Naive thymus-derived CD4-positive, alpha-beta T cell (primary cell): ENCODE measurements at regions of chr14 and their contacts with region 1.

Region 1: GRCh38 chr14:91060351-91061055 is at the start of gene RPS6KA5:
- DNase-seq: peak; percentile 93 to 100 (median 100)
- ATAC-seq: peak; percentile 89
- H3K4me3 ChIP-seq: peak within 1 kb of the TSS; percentile 59
- H3K4me3 Mint-ChIP-seq: peak within 1 kb of the TSS in 9 of 10 donors; percentile 80 to 90 (median 86)
- H3K27ac ChIP-seq: peak within 1 kb of the TSS; percentile 91
- H3K27ac Mint-ChIP-seq: peak within 1 kb of the TSS; percentile 28 to 83 (median 74)
- H3K4me1 ChIP-seq: peaks cover 36 to 38% of the 10 kb centered on the region in 2 donors
- H3K4me1 Mint-ChIP-seq: peaks cover 39 to 71% (median 64%) of the 10 kb centered on the region in 7 donors
- H3K27me3 ChIP-seq: no peaks in the 10 kb centered on the region
- H3K27me3 Mint-ChIP-seq: no peaks in the 10 kb centered on the region
- total RNA-seq, gene RPS6KA5: 31.9 to 43.5 (median 34.3) TPM

Region 2: DNA sequence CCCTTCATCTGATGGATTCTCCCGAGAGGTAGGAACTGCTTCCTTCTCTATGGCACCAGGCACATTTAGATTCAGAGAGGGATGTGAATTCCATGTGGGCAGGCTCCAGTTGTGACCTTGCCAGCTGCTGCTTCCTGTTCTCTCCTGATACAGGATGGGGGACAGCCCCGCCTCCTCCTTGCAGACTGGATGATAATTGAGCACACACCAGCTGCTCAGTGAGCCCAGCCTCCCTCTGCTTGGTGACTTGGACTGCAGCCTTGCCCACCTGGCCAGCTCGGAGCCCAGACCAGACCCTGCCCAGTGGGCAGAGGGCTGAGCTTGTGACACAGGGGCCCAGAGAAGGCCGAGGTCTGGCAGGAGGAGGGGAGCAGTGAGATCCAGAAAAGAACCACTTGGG is 573.5 kb before region 1 on chr14:
- CTCF ChIA-PET with region 1: no interaction called
- POLR2A ChIA-PET with region 1: no interaction called
- intact Hi-C with region 1: no loop called
- DNase-seq: no peak
- ATAC-seq: no peak
- H3K4me3 ChIP-seq: no peak overlapping the region
- H3K4me3 Mint-ChIP-seq: no peak overlapping the region
- H3K27ac ChIP-seq: no peak overlapping the region
- H3K27ac Mint-ChIP-seq: no peak overlapping the region
- H3K4me1 ChIP-seq: peaks cover 9 to 14% of the 10 kb centered on the region in 2 donors
- H3K4me1 Mint-ChIP-seq: peaks cover 4 to 17% (median 16%) of the 10 kb centered on the region in 7 donors
- H3K27me3 ChIP-seq: no peaks in the 10 kb centered on the region
- H3K27me3 Mint-ChIP-seq: peaks cover 0 to 10% (median 0%) of the 10 kb centered on the region in 5 donors

Region 3: GRCh38 chr14:90758028-90758889 is 302.2 kb before region 1 on chr14:
- CTCF ChIA-PET with region 1: interaction called, 3 read pairs
- POLR2A ChIA-PET with region 1: no interaction called
- intact Hi-C with region 1: loop called (anchors 1 to 5 kb)
- DNase-seq: peak; percentile 83 to 98 (median 92)
- ATAC-seq: peak; percentile 94
- H3K4me3 ChIP-seq: peak overlapping the region; percentile 79
- H3K4me3 Mint-ChIP-seq: peak overlapping the region; percentile 75 to 92 (median 86)
- H3K27ac ChIP-seq: peak overlapping the region; percentile 75
- H3K27ac Mint-ChIP-seq: peak overlapping the region; percentile 80 to 95 (median 90)
- H3K4me1 ChIP-seq: peaks cover 7 to 21% of the 10 kb centered on the region in 2 donors
- H3K4me1 Mint-ChIP-seq: peaks cover 12 to 29% (median 23%) of the 10 kb centered on the region in 7 donors
- H3K27me3 ChIP-seq: no peaks in the 10 kb centered on the region
- H3K27me3 Mint-ChIP-seq: peaks cover 0 to 33% (median 6%) of the 10 kb centered on the region in 5 donors

Region 4: GRCh38 chr14:91021991-91022621 is 38.4 kb before region 1 on chr14:
- CTCF ChIA-PET with region 1: interaction called, 7 read pairs
- POLR2A ChIA-PET with region 1: no interaction called
- intact Hi-C with region 1: loop called (anchors 1 kb)
- DNase-seq: peak in 2 of 9 donors; percentile 13 to 49
- ATAC-seq: peak; percentile 48
- H3K4me3 ChIP-seq: peak overlapping the region; percentile 56
- H3K4me3 Mint-ChIP-seq: peak overlapping the region; percentile 73 to 92 (median 84)
- H3K27ac ChIP-seq: peak overlapping the region; percentile 73
- H3K27ac Mint-ChIP-seq: peak overlapping the region; percentile 88 to 99 (median 92)
- H3K4me1 ChIP-seq: peaks cover 7 to 12% of the 10 kb centered on the region in 2 donors
- H3K4me1 Mint-ChIP-seq: peaks cover 21 to 79% (median 74%) of the 10 kb centered on the region in 7 donors
- H3K27me3 ChIP-seq: no peaks in the 10 kb centered on the region
- H3K27me3 Mint-ChIP-seq: no peaks in the 10 kb centered on the region

Region 5: DNA sequence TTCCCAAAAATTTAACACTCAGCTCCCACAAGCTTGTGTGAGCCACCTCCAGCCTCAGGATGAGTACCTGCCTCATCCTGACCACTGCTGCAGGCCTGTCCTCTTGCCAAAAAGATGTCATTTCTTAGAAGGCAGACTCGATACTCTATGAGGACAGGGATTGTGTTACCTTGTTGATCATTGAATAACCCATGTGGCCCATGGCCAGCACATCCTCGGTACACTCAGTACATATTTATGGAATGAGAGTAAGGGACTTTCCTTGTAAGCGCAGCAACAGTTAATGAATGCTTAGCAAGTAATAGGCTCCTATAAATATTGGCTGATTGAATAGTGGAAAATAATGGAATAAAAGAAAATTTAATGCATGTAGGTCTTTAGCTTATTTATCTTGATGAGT is 38.1 kb after region 1 on chr14:
- CTCF ChIA-PET with region 1: no interaction called
- POLR2A ChIA-PET with region 1: no interaction called
- intact Hi-C with region 1: no loop called
- DNase-seq: no peak
- ATAC-seq: no peak
- H3K4me3 ChIP-seq: no peak overlapping the region
- H3K4me3 Mint-ChIP-seq: no peak overlapping the region
- H3K27ac ChIP-seq: no peak overlapping the region
- H3K27ac Mint-ChIP-seq: no peak overlapping the region
- H3K4me1 ChIP-seq: no peaks in the 10 kb centered on the region
- H3K4me1 Mint-ChIP-seq: peaks cover 0 to 2% (median 0%) of the 10 kb centered on the region in 7 donors
- H3K27me3 ChIP-seq: no peaks in the 10 kb centered on the region
- H3K27me3 Mint-ChIP-seq: peaks cover 0 to 28% (median 0%) of the 10 kb centered on the region in 5 donors

Region 6: GRCh38 chr14:91138511-91139359 is 78.2 kb after region 1 on chr14:
- CTCF ChIA-PET with region 1: interaction called, 3 read pairs
- POLR2A ChIA-PET with region 1: interaction called, 7 read pairs
- intact Hi-C with region 1: loop called in 1 of 2 experiments (anchors 1 kb)
- DNase-seq: peak in 8 of 9 donors; percentile 11 to 56 (median 45)
- ATAC-seq: peak; percentile 75
- H3K4me3 ChIP-seq: no peak overlapping the region
- H3K4me3 Mint-ChIP-seq: no peak overlapping the region
- H3K27ac ChIP-seq: no peak overlapping the region
- H3K27ac Mint-ChIP-seq: peak overlapping the region in 4 of 9 donors; percentile 31 to 67 (median 52)
- H3K4me1 ChIP-seq: peaks cover 5 to 12% of the 10 kb centered on the region in 2 donors
- H3K4me1 Mint-ChIP-seq: peaks cover 16 to 59% (median 33%) of the 10 kb centered on the region in 7 donors
- H3K27me3 ChIP-seq: no peaks in the 10 kb centered on the region
- H3K27me3 Mint-ChIP-seq: no peaks in the 10 kb centered on the region

Region 7: GRCh38 chr14:91317381-91318308 is 257.1 kb after region 1 on chr14:
- CTCF ChIA-PET with region 1: no interaction called
- POLR2A ChIA-PET with region 1: interaction called, 9 read pairs
- intact Hi-C with region 1: loop called (anchors 2 kb)
- DNase-seq: peak; percentile 58 to 86 (median 84)
- ATAC-seq: peak; percentile 60
- H3K4me3 ChIP-seq: peak overlapping the region; percentile 39
- H3K4me3 Mint-ChIP-seq: peak overlapping the region; percentile 73 to 88 (median 81)
- H3K27ac ChIP-seq: peak overlapping the region; percentile 82
- H3K27ac Mint-ChIP-seq: peak overlapping the region; percentile 93 to 99 (median 98)
- H3K4me1 ChIP-seq: peaks cover 58 to 61% of the 10 kb centered on the region in 2 donors
- H3K4me1 Mint-ChIP-seq: peaks cover 55 to 88% (median 70%) of the 10 kb centered on the region in 7 donors
- H3K27me3 ChIP-seq: no peaks in the 10 kb centered on the region
- H3K27me3 Mint-ChIP-seq: no peaks in the 10 kb centered on the region

Region 8: GRCh38 chr14:92106143-92106926 is 1045.8 kb after region 1 on chr14 and contains the start of gene ATXN3:
- CTCF ChIA-PET with region 1: no interaction called
- POLR2A ChIA-PET with region 1: no interaction called
- intact Hi-C with region 1: loop called in 1 of 2 experiments (anchors 5 kb)
- DNase-seq: peak; percentile 75 to 97 (median 93)
- ATAC-seq: peak; percentile 95
- H3K4me3 ChIP-seq: peak within 1 kb of the TSS; percentile 82
- H3K4me3 Mint-ChIP-seq: peak within 1 kb of the TSS; percentile 88 to 100 (median 98)
- H3K27ac ChIP-seq: peak within 1 kb of the TSS; percentile 91
- H3K27ac Mint-ChIP-seq: peak within 1 kb of the TSS; percentile 82 to 96 (median 92)
- H3K4me1 ChIP-seq: peaks cover 5 to 17% of the 10 kb centered on the region in 2 donors
- H3K4me1 Mint-ChIP-seq: peaks cover 39 to 72% (median 61%) of the 10 kb centered on the region in 7 donors
- H3K27me3 ChIP-seq: no peaks in the 10 kb centered on the region
- H3K27me3 Mint-ChIP-seq: no peaks in the 10 kb centered on the region
- total RNA-seq, gene ATXN3: 27.8 to 54.9 (median 36.9) TPM